ENCODE measurements at regions of chr9 and their contacts with region 1.

Region 1: GRCh38 chr9:72364679-72365524 is at the start of gene ZFAND5:
- DNase-seq: peak; percentile 91 to 98
- H3K4me3 ChIP-seq: peak within 1 kb of the TSS; percentile 96
- H3K27ac ChIP-seq: peak within 1 kb of the TSS; percentile 100
- H3K4me1 ChIP-seq: peaks cover 38% of the 10 kb centered on the region
- H3K27me3 ChIP-seq: no peaks in the 10 kb centered on the region
- CTCF ChIP-seq: no peak
- total RNA-seq, gene ZFAND5: 217 and 227 TPM in 2 replicates

Region 2: GRCh38 chr9:72305102-72305546 is 59.8 kb before region 1 on chr9:
- CTCF ChIA-PET with region 1: no interaction called
- POLR2A ChIA-PET with region 1: interaction called, 12 read pairs
- intact Hi-C with region 1: no loop called
- DNase-seq: peak; percentile 88 to 91
- H3K4me3 ChIP-seq: peak overlapping the region; percentile 25; the same call in 1 of the 2 replicates
- H3K27ac ChIP-seq: no peak overlapping the region
- H3K4me1 ChIP-seq: no peaks in the 10 kb centered on the region
- H3K27me3 ChIP-seq: no peaks in the 10 kb centered on the region
- CTCF ChIP-seq: no peak

Region 3: GRCh38 chr9:72443855-72444254 is 79.0 kb after region 1 on chr9:
- CTCF ChIA-PET with region 1: no interaction called
- POLR2A ChIA-PET with region 1: interaction called, 6 read pairs
- intact Hi-C with region 1: loop called (anchors 1 kb)
- DNase-seq: no peak
- H3K4me3 ChIP-seq: no peak overlapping the region
- H3K27ac ChIP-seq: peak overlapping the region; percentile 82
- H3K4me1 ChIP-seq: peaks cover 42% of the 10 kb centered on the region
- H3K27me3 ChIP-seq: no peaks in the 10 kb centered on the region
- CTCF ChIP-seq: no peak

Region 4: GRCh38 chr9:72526901-72527800 is 162.2 kb after region 1 on chr9:
- CTCF ChIA-PET with region 1: interaction called, 3 read pairs
- POLR2A ChIA-PET with region 1: interaction called, 22 read pairs
- intact Hi-C with region 1: loop called (anchors 1 kb)
- DNase-seq: peak; percentile 94 to 97
- H3K4me3 ChIP-seq: peak overlapping the region; percentile 60
- H3K27ac ChIP-seq: peak overlapping the region; percentile 96
- H3K4me1 ChIP-seq: peaks cover 67% of the 10 kb centered on the region
- H3K27me3 ChIP-seq: no peaks in the 10 kb centered on the region
- CTCF ChIP-seq: no peak

Region 5: GRCh38 chr9:72577212-72577753 is 212.4 kb after region 1 on chr9:
- CTCF ChIA-PET with region 1: no interaction called
- POLR2A ChIA-PET with region 1: interaction called, 19 read pairs
- intact Hi-C with region 1: loop called (anchors 5 kb)
- DNase-seq: peak; percentile 59 to 95
- H3K4me3 ChIP-seq: peak overlapping the region; percentile 43; the same call in 1 of the 2 replicates
- H3K27ac ChIP-seq: peak overlapping the region; percentile 95
- H3K4me1 ChIP-seq: peaks cover 89% of the 10 kb centered on the region
- H3K27me3 ChIP-seq: no peaks in the 10 kb centered on the region
- CTCF ChIP-seq: no peak

Region 6: DNA sequence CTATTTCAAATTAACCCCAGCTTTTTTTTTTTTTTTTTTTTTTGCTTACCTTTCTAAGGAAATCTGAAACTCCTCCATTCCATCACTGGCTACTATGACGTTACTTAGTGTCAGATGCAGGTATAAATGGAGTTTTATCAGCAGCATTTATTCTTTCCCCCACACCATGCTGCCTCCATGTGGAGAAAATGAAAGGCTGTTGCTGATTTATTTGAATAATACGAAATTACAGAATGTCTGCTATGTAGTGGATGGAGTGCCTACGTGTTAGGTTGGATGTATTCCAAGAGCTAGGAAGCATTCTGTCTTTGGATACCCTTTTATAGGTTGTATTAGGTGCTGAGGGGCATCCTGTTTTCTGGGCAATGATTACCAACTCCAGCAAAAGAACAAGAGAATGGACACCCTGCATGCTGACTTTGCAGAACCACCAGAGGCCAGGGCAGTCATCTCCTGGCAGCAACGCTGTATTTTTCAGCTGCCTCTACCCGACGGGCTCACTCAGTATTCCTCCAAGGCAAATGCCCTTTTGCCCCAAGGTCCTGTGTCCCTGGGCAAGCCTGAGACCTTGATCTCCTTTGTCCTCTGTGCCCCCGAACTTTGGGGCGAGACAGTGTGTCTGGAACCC is 388.5 kb after region 1 on chr9:
- CTCF ChIA-PET with region 1: no interaction called
- POLR2A ChIA-PET with region 1: no interaction called
- intact Hi-C with region 1: loop called (anchors 5 kb)
- DNase-seq: peak in 1 of 2 experiments; percentile 18
- H3K4me3 ChIP-seq: no peak overlapping the region
- H3K27ac ChIP-seq: no peak overlapping the region
- H3K4me1 ChIP-seq: no peaks in the 10 kb centered on the region
- H3K27me3 ChIP-seq: no peaks in the 10 kb centered on the region
- CTCF ChIP-seq: peak; percentile 49

Region 7: GRCh38 chr9:73183917-73184861 is 819.3 kb after region 1 on chr9:
- CTCF ChIA-PET with region 1: no interaction called
- POLR2A ChIA-PET with region 1: no interaction called
- intact Hi-C with region 1: loop called (anchors 5 kb)
- DNase-seq: peak in 1 of 2 experiments; percentile 52
- H3K4me3 ChIP-seq: no peak overlapping the region
- H3K27ac ChIP-seq: no peak overlapping the region
- H3K4me1 ChIP-seq: peaks cover 23% of the 10 kb centered on the region
- H3K27me3 ChIP-seq: no peaks in the 10 kb centered on the region
- CTCF ChIP-seq: peak; percentile 80